ENCODE measurements at regions of chr1 and their contacts with region 1.

Region 1: GRCh38 chr1:15515022-15515663 is 8.9 kb downstream of the CASP9 start:
- H3K4me3 ChIP-seq: no peak overlapping the region
- H3K27ac ChIP-seq: no peak overlapping the region
- H3K4me1 ChIP-seq: no peaks in the 10 kb centered on the region
- CTCF ChIP-seq: no peak

Region 2: GRCh38 chr1:15501208-15502032 is 13.7 kb before region 1 on chr1:
- CTCF ChIA-PET with region 1: interaction called, 13 read pairs
- POLR2A ChIA-PET with region 1: no interaction called
- H3K4me3 ChIP-seq: no peak overlapping the region
- H3K27ac ChIP-seq: no peak overlapping the region
- H3K4me1 ChIP-seq: no peaks in the 10 kb centered on the region
- CTCF ChIP-seq: peak; percentile 41; the same call in 1 of the 2 replicates

Region 3: DNA sequence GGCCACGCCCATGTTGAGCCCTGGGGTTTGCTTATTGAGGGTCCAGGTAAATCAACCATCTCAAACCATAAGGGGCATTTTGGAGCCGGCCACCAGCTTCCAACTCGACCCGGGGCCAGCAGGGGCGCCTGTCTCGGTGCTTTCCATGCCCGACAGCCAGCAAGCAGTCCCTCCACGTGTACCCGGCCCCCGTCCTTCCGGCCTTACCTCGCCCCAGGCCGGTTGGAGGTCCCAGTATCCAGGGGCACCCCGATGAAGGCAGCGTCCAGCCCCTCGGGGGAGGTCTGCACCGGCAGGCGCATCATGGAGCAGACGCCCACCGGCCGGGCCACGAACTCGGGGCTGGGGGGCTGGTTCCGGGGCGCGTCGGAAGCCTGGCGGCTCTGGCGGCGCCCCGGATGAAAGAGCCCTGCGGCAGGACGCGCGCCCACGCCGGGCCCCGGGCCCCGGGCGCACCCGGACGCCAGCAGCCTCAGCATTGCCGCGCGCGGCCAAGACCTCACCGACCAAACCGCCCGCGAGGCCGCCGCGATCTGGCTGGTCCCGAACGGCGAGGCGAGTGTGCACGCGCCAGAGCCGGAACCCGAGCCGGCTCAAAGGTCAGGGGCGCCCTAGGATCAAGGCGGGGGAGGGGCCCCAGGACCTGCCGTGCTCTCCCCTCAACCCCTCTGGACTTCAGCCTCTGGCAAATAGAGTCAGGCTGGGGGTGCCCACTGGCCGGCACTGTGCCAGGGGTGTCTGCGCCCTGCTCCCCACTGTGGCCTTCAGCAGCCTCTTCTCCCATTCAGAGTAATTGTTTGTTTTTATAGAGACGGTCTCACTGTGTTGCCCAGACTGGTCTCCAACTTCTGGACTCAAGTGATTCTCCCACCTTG is 69.6 kb after region 1 on chr1 and contains the start of gene AGMAT:
- CTCF ChIA-PET with region 1: no interaction called
- POLR2A ChIA-PET with region 1: no interaction called
- H3K4me3 ChIP-seq: peak within 1 kb of the TSS; percentile 14
- H3K27ac ChIP-seq: peak within 1 kb of the TSS; percentile 37; the same call in 1 of the 2 replicates
- H3K4me1 ChIP-seq: no peaks in the 10 kb centered on the region
- CTCF ChIP-seq: no peak